Caco-2 (cell line): ENCODE measurements at regions of chrX and their contacts with region 1.

Region 1: GRCh38 chrX:7925867-7926472 is 1.2 kb downstream of the PNPLA4 start:
- DNase-seq: peak; percentile 56 to 60
- H3K4me3 ChIP-seq: no peak overlapping the region
- H3K4me3 Mint-ChIP-seq: no peak overlapping the region
- H3K27ac Mint-ChIP-seq: no peak overlapping the region
- H3K4me1 ChIP-seq: peaks cover 3% of the 10 kb centered on the region; the same call in 1 of the 2 replicates
- H3K4me1 Mint-ChIP-seq: no peaks in the 10 kb centered on the region
- H3K27me3 ChIP-seq: no peaks in the 10 kb centered on the region
- H3K27me3 Mint-ChIP-seq: no peaks in the 10 kb centered on the region
- CTCF ChIP-seq: peak; percentile 41 to 57

Region 2: DNA sequence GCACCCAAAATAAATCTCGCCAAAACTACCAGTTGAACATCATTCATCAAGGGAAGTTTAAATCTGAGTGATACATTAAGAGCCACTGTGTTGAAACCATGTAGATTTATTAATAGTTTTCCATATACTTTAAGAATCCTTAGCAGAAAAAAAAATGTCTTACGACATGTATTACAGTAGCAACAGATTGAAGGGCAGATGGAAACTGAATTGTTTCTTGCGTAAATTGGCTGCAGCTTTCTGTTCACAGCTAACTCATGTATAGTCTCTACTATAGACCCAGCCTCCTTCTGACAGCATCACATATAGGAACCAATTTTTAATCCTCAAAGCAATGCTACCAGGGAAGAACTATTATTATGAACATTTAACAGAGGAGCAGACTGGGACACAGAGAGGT is 582.8 kb before region 1 on chrX:
- CTCF ChIA-PET with region 1: no interaction called
- POLR2A ChIA-PET with region 1: no interaction called
- intact Hi-C with region 1: loop called (anchors 5 kb)
- DNase-seq: no peak
- H3K4me3 ChIP-seq: no peak overlapping the region
- H3K4me3 Mint-ChIP-seq: no peak overlapping the region
- H3K27ac Mint-ChIP-seq: no peak overlapping the region
- H3K4me1 ChIP-seq: no peaks in the 10 kb centered on the region
- H3K4me1 Mint-ChIP-seq: no peaks in the 10 kb centered on the region
- H3K27me3 ChIP-seq: no peaks in the 10 kb centered on the region
- H3K27me3 Mint-ChIP-seq: no peaks in the 10 kb centered on the region
- CTCF ChIP-seq: no peak

Region 3: DNA sequence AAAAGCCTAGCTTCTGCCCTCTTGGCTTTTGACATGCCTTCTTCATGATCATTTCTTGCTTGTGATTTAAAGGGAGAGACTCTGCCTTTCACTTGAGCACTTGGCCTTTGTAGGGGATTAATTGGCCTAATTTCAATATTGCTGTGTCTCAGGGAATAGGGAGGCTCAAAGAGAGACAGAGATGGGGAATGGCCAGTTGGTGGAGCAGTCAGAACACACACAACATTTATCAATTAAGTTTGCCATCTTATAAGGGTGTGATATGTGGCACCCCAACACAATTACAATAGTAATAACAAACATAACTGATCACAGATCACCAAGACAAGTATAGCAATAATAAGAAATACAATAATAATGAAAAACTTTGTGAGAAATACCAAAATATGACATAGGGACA is 205.5 kb before region 1 on chrX:
- CTCF ChIA-PET with region 1: interaction called, 3 read pairs
- POLR2A ChIA-PET with region 1: no interaction called
- intact Hi-C with region 1: loop called (anchors 1 kb)
- DNase-seq: no peak
- H3K4me3 ChIP-seq: no peak overlapping the region
- H3K4me3 Mint-ChIP-seq: no peak overlapping the region
- H3K27ac Mint-ChIP-seq: no peak overlapping the region
- H3K4me1 ChIP-seq: no peaks in the 10 kb centered on the region
- H3K4me1 Mint-ChIP-seq: no peaks in the 10 kb centered on the region
- H3K27me3 ChIP-seq: no peaks in the 10 kb centered on the region
- H3K27me3 Mint-ChIP-seq: no peaks in the 10 kb centered on the region
- CTCF ChIP-seq: no peak

Region 4: DNA sequence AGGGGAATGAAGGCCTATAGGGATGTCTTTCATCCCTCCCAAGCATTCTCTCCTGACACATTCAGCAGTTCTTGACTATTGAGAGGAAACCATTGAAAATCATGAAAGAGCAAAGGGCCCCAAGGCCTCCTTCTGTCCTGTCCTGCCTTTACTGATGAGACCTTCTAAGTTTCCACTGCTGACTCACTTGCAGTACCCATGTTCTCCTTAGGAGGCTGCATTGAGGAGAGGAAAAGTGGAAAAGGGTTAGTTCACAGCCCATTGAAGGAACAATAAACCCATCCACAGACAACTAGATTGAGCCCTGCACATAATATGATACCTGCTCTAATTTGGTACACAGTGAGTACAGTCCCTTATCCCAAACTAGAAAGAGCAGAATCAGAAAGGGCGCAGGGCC is 116.3 kb after region 1 on chrX:
- CTCF ChIA-PET with region 1: no interaction called
- POLR2A ChIA-PET with region 1: no interaction called
- intact Hi-C with region 1: no loop called
- DNase-seq: peak in 1 of 2 experiments; percentile 10
- H3K4me3 ChIP-seq: no peak overlapping the region
- H3K4me3 Mint-ChIP-seq: no peak overlapping the region
- H3K27ac Mint-ChIP-seq: no peak overlapping the region
- H3K4me1 ChIP-seq: no peaks in the 10 kb centered on the region
- H3K4me1 Mint-ChIP-seq: no peaks in the 10 kb centered on the region
- H3K27me3 ChIP-seq: no peaks in the 10 kb centered on the region
- H3K27me3 Mint-ChIP-seq: no peaks in the 10 kb centered on the region
- CTCF ChIP-seq: peak in 1 of 2 experiments; percentile 7